Right ventricle myocardium inferior (tissue), 1 donor: ENCODE measurements at regions of chrX and their contacts with region 1.

Region 1: DNA sequence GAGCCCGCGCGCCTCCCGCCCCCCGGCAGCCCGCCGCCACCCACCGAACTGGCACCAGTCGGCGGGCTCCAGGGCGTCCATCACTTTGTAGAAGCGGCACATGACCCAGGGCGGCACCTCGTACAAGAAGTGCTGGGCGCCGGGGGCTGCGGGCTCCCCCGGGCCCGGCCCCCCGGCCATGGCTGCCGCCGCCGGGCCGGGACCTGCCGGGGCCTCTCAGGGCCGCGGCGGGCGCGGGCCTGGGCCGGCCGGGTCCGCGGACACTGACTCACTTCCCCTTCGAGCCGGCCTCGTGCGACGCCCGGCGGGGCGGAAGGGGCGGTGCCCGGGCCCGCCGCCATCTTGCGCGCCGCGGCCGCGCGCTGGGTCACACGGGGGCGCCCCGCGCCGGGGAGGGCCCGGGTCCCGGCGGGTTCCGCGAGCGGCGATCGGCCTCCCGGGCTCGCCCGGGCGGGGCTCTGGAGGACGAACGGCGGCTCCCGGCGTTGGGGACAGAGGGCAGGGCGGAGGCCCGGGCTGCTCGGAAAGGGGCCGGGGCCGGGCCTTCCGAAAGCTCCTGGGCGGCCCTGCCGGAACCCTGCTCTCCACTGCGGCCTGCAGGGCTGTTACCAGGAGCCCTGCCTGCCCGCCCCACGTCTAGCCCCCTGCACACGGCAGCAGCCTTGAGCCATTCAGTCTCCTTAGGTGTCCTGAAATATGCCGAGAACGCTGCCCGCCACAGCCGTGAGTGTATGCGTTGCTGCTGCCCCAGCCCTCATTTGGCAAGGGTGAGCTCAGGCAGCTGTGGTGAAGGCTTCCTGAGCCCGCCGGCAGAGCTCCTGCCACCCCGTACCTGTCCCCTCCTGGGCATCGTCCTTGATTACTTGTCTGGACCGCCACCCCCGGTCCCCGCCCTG is at the start of gene IRAK1:
- DNase-seq: peak; percentile 85
- ATAC-seq: peak; percentile 90
- total RNA-seq, gene IRAK1: 38.6 TPM

Region 2: DNA sequence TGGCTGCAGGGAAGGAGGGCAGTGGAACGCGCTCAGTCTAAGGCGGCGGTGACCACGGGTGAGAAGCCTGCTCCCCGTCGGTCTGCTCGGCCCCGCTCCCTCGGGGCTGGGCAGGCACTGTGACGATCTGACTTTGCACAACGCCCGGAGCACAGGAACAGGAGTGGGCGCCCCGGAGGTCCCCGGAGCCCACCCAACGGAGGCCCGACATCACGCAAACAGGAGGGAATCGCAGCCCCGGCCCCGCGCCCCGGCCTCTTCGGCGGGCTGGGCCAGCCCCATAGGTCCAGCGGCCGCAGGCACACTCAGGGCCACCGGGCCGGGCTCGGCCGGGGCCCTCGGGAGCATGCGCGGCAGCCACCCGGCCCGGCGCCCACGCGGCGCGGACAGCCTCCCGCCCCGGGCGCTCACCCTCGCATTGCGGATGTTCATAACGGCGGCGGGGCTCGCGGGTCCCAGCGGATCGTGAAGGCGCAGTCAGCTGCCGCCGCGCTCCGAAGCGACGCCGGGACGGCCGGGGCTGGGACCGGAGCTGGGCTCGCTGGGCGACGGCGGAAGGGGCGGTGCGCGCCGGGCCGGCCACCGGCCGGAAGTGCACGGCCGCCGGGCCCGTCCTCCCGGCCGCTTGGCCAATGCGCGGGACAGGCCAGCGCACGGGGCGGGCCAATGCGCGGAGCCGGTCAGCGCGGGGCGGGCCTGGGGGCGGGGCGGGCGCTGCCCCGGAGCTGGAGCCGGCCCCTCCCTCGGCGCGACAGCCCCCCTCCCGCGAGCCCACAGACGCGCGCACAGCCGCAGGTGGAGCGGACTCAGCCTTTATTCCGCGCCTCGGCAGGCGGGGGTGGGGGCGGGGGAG is 85.2 kb before region 1 on chrX and contains the start of gene NAA10:
- intact Hi-C with region 1: no loop called
- DNase-seq: peak; percentile 81
- ATAC-seq: peak; percentile 99
- total RNA-seq, gene NAA10: 80.6 TPM

Region 3: DNA sequence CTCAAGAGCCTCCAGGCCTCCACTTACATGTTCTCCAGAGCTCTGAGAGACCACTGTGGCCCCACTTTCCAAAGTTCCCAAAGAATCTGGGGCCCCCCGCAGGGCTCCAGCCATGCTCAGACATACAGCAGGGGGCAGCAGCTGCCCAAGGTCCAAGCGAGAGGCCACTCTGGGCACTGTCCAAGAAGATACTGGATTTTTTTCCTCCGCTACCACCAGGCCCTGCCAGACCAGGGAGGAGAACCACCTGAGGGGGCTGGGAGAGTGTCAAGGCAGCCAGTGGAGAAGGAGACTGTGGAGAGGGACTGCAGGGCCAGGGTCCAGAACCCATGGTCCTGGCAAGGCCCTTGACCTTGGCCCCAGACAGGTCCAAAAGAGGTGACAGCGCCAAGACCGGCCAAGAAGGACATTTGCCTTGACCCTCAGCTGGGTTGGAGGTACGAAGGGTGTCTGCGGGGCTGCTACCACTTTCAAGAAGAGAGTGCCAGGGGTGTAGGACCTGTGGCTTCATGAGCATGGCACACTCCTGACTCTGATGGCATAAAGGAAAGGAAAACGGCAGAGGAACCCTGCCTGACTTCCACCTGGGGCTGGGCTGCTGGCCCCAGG is 364.5 kb after region 1 on chrX:
- intact Hi-C with region 1: loop called (anchors 10 kb)
- DNase-seq: no peak
- ATAC-seq: no peak